Activated CD8-positive, alpha-beta T cell treated with anti-CD3 and anti-CD28 coated beads for 36 hours (primary cell): ENCODE measurements at regions of chr10 and their contacts with region 1.

Region 1: DNA sequence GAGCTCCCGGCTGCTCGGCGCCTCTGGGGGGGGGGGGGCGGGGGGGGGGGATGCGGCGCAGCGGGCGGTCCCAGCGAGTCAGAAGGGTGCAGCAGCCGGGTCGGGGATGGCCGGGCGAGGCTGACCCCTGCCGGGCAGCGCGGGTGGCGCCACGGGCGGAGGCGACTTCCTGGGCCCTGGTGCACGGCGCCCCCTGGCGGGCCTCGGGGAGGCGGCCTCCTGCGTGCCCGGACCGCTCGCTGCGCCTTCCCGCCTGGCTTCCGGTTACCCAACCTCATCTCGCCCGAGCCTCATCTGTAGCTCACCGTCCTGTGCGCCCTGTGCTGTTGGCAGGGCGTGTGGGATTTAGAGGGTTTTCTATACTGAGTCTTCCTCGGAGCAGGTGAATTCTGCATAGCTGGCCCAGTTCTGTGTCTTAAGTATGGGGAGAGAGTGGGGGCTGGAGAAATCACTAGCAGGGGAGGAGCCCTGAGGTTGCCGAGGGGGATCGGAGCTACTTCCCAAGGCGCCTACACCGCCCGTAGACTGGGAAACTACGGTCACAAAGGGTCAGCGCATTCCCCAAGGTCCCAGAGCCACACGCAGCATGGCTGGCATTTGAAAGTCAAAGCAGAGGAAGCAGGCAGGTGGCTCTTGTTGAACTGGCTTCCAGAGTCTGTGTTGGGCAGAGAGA is 28.3 kb upstream of the WDFY4 start:
- DNase-seq: peak; percentile 92
- ATAC-seq: peak; percentile 96
- H3K4me3 Mint-ChIP-seq: peak overlapping the region; percentile 63
- H3K27ac Mint-ChIP-seq: no peak overlapping the region
- H3K4me1 Mint-ChIP-seq: peaks cover 7% of the 10 kb centered on the region
- H3K27me3 Mint-ChIP-seq: peaks cover 18% of the 10 kb centered on the region
- CTCF ChIP-seq: peak; percentile 99

Region 2: GRCh38 chr10:48363617-48364355 is 292.6 kb before region 1 on chr10:
- CTCF ChIA-PET with region 1: interaction called, 97 read pairs
- POLR2A ChIA-PET with region 1: no interaction called
- intact Hi-C with region 1: loop called (anchors 5 kb)
- DNase-seq: peak; percentile 41
- ATAC-seq: no peak
- H3K4me3 Mint-ChIP-seq: no peak overlapping the region
- H3K27ac Mint-ChIP-seq: no peak overlapping the region
- H3K4me1 Mint-ChIP-seq: peaks cover 21% of the 10 kb centered on the region
- H3K27me3 Mint-ChIP-seq: no peaks in the 10 kb centered on the region
- CTCF ChIP-seq: peak; percentile 82

Region 3: GRCh38 chr10:48608279-48608681 is 48.1 kb before region 1 on chr10:
- CTCF ChIA-PET with region 1: interaction called, 91 read pairs
- POLR2A ChIA-PET with region 1: interaction called, 3 read pairs
- intact Hi-C with region 1: no loop called
- DNase-seq: peak; percentile 56
- ATAC-seq: peak; percentile 95
- H3K4me3 Mint-ChIP-seq: no peak overlapping the region
- H3K27ac Mint-ChIP-seq: no peak overlapping the region
- H3K4me1 Mint-ChIP-seq: peaks cover 2% of the 10 kb centered on the region
- H3K27me3 Mint-ChIP-seq: peaks cover 34% of the 10 kb centered on the region
- CTCF ChIP-seq: peak; percentile 69

Region 4: GRCh38 chr10:48634198-48634983 is 22.0 kb before region 1 on chr10:
- CTCF ChIA-PET with region 1: interaction called, 19 read pairs
- POLR2A ChIA-PET with region 1: no interaction called
- intact Hi-C with region 1: no loop called
- DNase-seq: peak; percentile 37
- ATAC-seq: peak; percentile 82
- H3K4me3 Mint-ChIP-seq: no peak overlapping the region
- H3K27ac Mint-ChIP-seq: no peak overlapping the region
- H3K4me1 Mint-ChIP-seq: peaks cover 10% of the 10 kb centered on the region
- H3K27me3 Mint-ChIP-seq: peaks cover 10% of the 10 kb centered on the region
- CTCF ChIP-seq: no peak

Region 5: GRCh38 chr10:49518982-49519578 is 862.7 kb after region 1 on chr10:
- CTCF ChIA-PET with region 1: interaction called, 7 read pairs
- POLR2A ChIA-PET with region 1: no interaction called
- intact Hi-C with region 1: loop called (anchors 10 kb)
- DNase-seq: peak; percentile 42
- ATAC-seq: peak; percentile 72
- H3K4me3 Mint-ChIP-seq: no peak overlapping the region
- H3K27ac Mint-ChIP-seq: no peak overlapping the region
- H3K4me1 Mint-ChIP-seq: no peaks in the 10 kb centered on the region
- H3K27me3 Mint-ChIP-seq: no peaks in the 10 kb centered on the region
- CTCF ChIP-seq: peak; percentile 76